ENCODE measurements at regions of chr3 and their contacts with region 1.

Region 1: DNA sequence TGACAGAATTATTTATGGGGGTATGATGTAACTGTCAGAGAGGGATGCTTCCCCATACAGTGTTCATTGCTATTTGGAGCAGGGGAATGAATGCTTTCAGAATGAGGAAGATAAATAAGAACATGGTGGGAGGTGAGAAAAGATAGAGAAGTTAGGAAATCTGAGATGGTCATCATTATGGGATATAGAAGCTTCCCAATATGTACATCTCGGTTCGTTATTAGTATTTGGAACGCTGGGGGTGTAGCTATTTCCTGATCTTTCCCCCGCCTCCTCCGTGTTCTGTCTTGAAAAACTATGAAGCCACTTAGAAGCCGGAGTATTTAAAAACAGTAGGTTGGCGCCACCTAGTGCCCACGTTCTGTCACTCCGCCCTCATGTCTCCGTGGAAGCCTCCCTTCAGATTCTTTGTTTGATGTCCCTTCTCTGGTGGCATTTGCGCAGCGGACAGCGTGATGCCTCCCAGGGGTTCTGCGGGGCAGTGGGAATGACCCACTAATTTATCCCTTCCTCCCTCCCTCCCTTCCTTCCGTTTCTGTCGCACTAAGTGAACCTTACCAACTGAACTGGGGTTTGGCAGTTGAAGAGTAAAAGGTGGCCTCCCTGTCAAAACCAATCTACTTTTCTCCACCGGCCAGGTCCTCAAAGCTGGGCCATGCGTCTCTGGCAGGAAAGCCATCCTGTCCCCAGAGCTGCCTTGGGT is 184.5 kb downstream of the FEZF2 start:
- DNase-seq: peak; percentile 66 to 79 (median 71)
- ATAC-seq: peak; percentile 45 to 74 (median 66)
- H3K4me3 ChIP-seq: peak overlapping the region in 1 of 12 donors; percentile 24
- H3K27ac ChIP-seq: peak overlapping the region in 1 of 12 donors; percentile 9
- H3K4me1 ChIP-seq: peaks cover 0 to 30% (median 16%) of the 10 kb centered on the region in 12 donors
- H3K27me3 ChIP-seq: no peaks in the 10 kb centered on the region
- CTCF ChIP-seq: peak; percentile 76 to 89 (median 84)
- POLR2A ChIP-seq: no peak

Region 2: DNA sequence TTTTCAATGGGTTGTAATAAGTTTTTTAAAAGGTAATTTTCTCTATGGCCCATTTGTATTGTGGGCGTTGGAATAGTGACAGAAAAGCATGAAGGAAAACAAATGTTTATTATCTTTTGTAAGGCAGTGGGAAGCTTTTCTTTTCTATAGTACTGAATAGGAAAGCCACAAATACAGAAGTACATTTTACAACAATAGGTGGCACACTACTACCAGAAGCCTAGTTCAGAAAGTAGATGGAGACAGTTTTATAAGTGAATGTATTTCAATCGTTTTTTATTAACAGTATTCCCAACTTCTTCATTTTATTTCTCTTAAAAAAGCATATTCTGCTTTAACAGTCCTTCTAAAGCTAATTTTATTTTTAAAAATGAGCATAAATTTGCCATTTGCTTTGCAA is 330.8 kb before region 1 on chr3:
- intact Hi-C with region 1: loop called (anchors 1 to 5 kb)
- DNase-seq: no peak
- ATAC-seq: peak in 2 of 4 donors; percentile 53 to 59
- H3K4me3 ChIP-seq: no peak overlapping the region
- H3K27ac ChIP-seq: peak overlapping the region in 1 of 12 donors; percentile 10
- H3K4me1 ChIP-seq: peaks cover 0 to 83% (median 40%) of the 10 kb centered on the region in 12 donors
- H3K27me3 ChIP-seq: no peaks in the 10 kb centered on the region
- CTCF ChIP-seq: peak; percentile 34 to 78 (median 66)
- POLR2A ChIP-seq: no peak

Region 3: GRCh38 chr3:61927332-61927731 is 261.5 kb before region 1 on chr3:
- intact Hi-C with region 1: loop called in 3 of 10 experiments (anchors 5 to 10 kb)
- DNase-seq: peak; percentile 77 to 90 (median 86)
- ATAC-seq: peak; percentile 90 to 93 (median 92)
- H3K4me3 ChIP-seq: peak overlapping the region in 3 of 12 donors; percentile 6 to 30 (median 13)
- H3K27ac ChIP-seq: peak overlapping the region; percentile 29 to 91 (median 76)
- H3K4me1 ChIP-seq: peaks cover 9 to 73% (median 50%) of the 10 kb centered on the region in 12 donors
- H3K27me3 ChIP-seq: no peaks in the 10 kb centered on the region
- CTCF ChIP-seq: no peak
- POLR2A ChIP-seq: no peak

Region 4: GRCh38 chr3:62046326-62046725 is 142.5 kb before region 1 on chr3:
- intact Hi-C with region 1: loop called in 1 of 10 experiments (anchors 10 kb)
- DNase-seq: no peak
- ATAC-seq: no peak
- H3K4me3 ChIP-seq: no peak overlapping the region
- H3K27ac ChIP-seq: no peak overlapping the region
- H3K4me1 ChIP-seq: peaks cover 0 to 24% (median 1%) of the 10 kb centered on the region in 12 donors
- H3K27me3 ChIP-seq: no peaks in the 10 kb centered on the region
- CTCF ChIP-seq: no peak
- POLR2A ChIP-seq: no peak

Region 5: DNA sequence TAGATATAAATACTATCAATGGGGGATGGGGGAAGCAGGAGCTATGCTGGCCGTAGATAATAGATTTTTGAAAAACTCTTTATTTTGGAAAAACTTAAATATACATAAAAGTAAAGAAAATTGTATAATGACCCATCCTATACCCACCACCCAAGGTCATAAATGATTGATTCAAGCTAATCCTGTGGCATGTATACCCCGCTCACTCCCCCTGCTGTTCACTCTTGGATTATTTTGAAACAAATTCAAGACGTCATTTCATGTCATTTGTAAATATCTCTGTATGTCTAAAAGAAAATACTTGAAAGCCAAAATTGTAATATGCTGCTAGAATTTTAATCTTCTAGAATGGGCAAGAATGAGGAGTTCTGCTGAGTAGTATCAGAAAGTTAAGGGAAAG is 57.2 kb before region 1 on chr3:
- intact Hi-C with region 1: loop called in 4 of 10 experiments (anchors 1 to 5 kb)
- DNase-seq: no peak
- ATAC-seq: no peak
- H3K4me3 ChIP-seq: no peak overlapping the region
- H3K27ac ChIP-seq: no peak overlapping the region
- H3K4me1 ChIP-seq: peaks cover 5 to 51% (median 27%) of the 10 kb centered on the region in 12 donors
- H3K27me3 ChIP-seq: no peaks in the 10 kb centered on the region
- CTCF ChIP-seq: peak in 11 of 12 donors; percentile 13 to 59 (median 51)
- POLR2A ChIP-seq: no peak